Dendritic cell treated with granulocyte-macrophage colony-stimulating factor and Interleukin-4, amounts not matched to agents 40 ng/mL and 50 ng/mL, for 4 days (primary cell): ENCODE measurements at regions of chr11 and their contacts with region 1.

Region 1: DNA sequence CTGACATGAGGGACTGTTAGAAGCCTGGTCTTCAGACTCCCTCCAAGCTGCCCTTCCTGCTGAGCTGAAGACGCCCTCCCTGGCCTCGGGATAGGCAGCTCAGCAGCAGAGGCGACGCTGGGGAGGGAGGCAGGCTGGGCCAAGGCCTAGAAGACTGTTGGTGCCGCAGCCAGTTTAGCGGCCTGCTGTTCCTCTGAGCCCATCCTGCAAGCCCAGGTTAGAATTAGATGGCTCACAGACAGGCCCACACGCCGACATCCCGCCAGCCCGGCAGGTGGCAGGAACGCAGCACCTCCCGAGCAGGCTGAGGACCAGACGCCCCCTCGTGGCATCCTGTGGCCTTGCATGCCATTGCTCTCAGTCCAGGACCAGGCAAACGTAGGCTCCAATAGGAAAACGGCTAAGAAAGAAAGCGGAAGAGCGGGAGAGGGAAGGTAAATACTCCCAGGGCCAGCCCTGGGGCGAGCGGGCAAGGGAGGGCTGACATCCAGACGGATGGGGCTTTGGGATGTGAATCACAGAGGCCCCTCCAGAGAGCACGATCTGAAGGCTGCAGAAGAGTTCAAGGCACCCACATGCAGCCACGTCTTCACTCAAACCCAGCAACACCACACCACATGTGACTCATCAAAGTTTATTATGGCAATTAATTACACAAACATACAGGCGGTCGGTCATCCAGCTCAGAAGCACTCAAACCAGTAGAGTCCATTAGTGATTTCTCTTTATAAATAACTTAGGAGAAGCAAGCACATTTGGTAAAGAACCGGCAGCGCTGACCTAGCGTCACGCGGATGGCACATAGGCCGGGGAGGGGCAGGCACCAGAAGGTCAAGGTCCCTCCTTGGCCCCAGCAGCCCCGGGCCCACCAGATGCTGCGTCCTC is 27.6 kb downstream of the CD5 start:
- H3K4me3 Mint-ChIP-seq: peak overlapping the region; percentile 13
- H3K27ac Mint-ChIP-seq: peak overlapping the region; percentile 60
- H3K4me1 Mint-ChIP-seq: peaks cover 25% of the 10 kb centered on the region
- H3K27me3 Mint-ChIP-seq: no peaks in the 10 kb centered on the region

Region 2: DNA sequence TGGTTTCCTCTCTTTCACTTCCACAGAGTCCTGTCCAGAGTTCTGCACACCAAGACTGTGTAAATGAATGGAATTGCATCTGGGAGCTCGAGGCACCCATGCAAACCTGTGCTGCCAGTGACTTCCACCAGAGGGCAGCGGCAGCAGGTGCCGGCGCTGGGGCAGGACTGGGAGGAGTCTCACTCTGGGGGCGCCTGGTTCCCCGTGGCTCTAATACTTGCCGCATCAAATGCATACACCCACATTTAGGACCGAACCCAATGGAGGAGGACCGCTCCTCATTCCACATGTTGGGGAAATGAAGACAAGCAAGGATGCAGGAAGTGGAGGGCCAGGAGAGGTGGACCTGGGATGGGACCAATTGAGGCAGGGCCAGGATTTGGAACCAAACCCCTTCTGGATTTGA is 159.5 kb before region 1 on chr11:
- intact Hi-C with region 1: loop called (anchors 1 kb)
- H3K4me3 Mint-ChIP-seq: no peak overlapping the region
- H3K27ac Mint-ChIP-seq: no peak overlapping the region
- H3K4me1 Mint-ChIP-seq: peaks cover 48% of the 10 kb centered on the region
- H3K27me3 Mint-ChIP-seq: peaks cover 36% of the 10 kb centered on the region

Region 3: DNA sequence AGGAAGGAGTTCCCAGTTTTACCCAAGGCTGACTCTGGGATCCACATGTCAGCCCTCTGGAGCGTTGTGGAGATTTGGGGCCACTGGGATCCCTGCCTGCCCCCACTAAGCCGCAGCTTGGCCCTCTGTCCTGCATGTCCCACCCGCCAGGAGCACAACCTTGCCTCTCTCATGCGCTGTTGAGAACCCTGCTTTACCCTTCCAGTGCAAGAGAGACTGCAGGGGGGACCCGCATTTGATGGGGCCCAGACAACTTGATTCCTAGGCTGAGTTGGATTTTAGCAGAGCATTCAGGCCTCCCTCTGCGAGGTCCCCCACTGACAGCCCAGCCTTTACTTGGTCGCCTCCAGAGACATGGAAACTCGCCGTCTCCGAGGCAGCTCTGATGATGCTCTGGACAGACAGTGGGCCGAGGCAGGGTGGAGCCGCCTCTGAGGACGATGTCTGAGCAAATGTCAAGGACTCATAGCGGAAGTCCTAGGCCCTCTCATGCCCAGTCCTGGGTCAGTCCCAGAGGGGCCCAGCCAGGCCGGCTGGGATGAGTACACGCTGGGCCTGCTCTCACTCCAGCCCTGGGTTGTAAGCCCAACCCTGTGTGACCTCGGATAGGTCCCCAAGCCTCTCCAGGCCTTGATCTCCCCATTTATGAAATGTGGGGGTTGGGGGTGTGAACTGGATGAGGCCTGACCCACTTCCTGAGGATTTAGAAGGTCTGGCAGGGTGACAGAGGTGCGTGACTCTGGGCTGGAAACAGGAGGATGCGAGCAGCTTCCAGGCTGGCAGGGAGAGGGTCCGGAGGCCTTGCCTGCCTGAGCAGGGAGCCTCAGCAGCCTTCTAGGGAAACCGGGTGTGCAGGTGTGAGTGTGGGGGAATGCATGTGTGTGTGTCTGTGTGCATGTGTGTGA is 27.0 kb before region 1 on chr11:
- intact Hi-C with region 1: no loop called
- H3K4me3 Mint-ChIP-seq: no peak overlapping the region
- H3K27ac Mint-ChIP-seq: no peak overlapping the region
- H3K4me1 Mint-ChIP-seq: peaks cover 11% of the 10 kb centered on the region
- H3K27me3 Mint-ChIP-seq: peaks cover 3% of the 10 kb centered on the region

Region 4: GRCh38 chr11:61555051-61555969 is 425.4 kb after region 1 on chr11:
- intact Hi-C with region 1: no loop called
- H3K4me3 Mint-ChIP-seq: no peak overlapping the region
- H3K27ac Mint-ChIP-seq: no peak overlapping the region
- H3K4me1 Mint-ChIP-seq: peaks cover 8% of the 10 kb centered on the region
- H3K27me3 Mint-ChIP-seq: peaks cover 70% of the 10 kb centered on the region